Vagina (tissue), 2 donors: ENCODE measurements at regions of chr12 and their contacts with region 1.

Region 1: DNA sequence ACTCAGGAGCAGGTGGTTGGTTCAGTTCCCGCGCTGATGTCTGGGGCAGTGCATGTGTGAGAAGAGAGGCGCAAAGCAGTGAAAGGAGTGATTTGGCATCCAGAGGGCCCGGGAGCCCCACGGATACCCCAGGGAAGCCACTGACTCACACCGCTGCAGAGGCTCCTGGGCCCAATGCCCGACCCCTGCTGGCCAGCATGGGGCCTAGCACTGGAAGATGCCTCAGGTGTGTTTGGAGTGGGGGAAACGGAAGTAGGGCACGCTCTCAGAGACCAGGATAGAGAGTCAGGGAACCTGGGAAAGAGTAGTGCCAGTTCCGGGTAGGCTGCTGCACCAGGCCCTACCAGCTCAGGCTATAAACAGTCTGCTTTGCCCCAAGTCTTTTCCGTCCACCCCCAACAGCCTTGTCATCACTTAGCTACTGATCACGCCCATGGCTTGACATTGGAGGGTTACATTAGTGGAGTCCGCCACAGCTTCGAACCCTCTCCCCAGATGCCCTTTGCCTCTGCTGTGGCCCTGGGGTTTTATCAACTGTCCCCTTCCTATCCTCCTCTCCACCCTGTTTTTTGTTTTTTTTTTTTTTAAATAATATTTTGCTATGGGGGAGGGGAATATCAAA is 9.5 kb upstream of the CSAD start:
- DNase-seq: no peak
- H3K4me3 ChIP-seq: no peak overlapping the region
- H3K27ac ChIP-seq: no peak overlapping the region
- H3K4me1 ChIP-seq: no peaks in the 10 kb centered on the region
- H3K27me3 ChIP-seq: no peaks in the 10 kb centered on the region
- CTCF ChIP-seq: peak in 2 of 3 experiments; percentile 30 to 45
- POLR2A ChIP-seq: no peak

Region 2: GRCh38 chr12:53065975-53066931 is 124.0 kb before region 1 on chr12:
- intact Hi-C with region 1: loop called (anchors 10 kb)
- DNase-seq: peak in 1 of 2 donors; percentile 89
- H3K4me3 ChIP-seq: no peak overlapping the region
- H3K27ac ChIP-seq: peak overlapping the region; percentile 80
- H3K4me1 ChIP-seq: peaks cover 89% of the 10 kb centered on the region
- H3K27me3 ChIP-seq: no peaks in the 10 kb centered on the region
- CTCF ChIP-seq: peak; percentile 88 to 97 (median 95)
- POLR2A ChIP-seq: no peak